ENCODE measurements at regions of chr5 and their contacts with region 1.

Region 1: GRCh38 chr5:52893105-52893504 is 96.0 kb upstream of the ITGA2 start:
- DNase-seq: no peak

Region 2: GRCh38 chr5:52693280-52693679 is 199.8 kb before region 1 on chr5:
- in situ Hi-C with region 1: loop called (anchors 25 kb)
- DNase-seq: no peak

Region 3: DNA sequence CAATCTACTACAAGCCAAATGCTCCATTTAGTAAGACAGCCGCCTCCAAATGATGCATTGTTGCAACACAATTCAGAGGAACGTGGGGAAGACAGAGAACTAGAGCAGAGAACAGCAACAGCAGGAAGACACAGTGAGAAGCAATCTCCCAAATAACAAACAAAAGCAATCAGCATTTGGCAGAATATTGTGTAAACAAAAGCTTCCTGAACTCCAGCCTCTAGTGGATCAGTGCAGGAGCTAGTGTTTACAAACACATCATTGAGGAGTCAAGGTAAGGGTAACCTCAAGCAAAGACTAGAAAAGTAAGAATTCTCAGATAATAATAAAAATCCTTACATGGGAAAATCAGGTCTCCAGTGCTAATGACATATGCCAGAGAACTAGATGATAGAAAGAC is 607.9 kb after region 1 on chr5:
- in situ Hi-C with region 1: no loop called
- DNase-seq: no peak

Measured in KBM-7 (cell line).